ENCODE measurements at regions of chr5 and their contacts with region 1.

Region 1: GRCh38 chr5:25190521-25191000 is 545.8 kb upstream of the CDH10 start:
- DNase-seq: no peak
- H3K4me3 ChIP-seq: no peak overlapping the region
- H3K27ac ChIP-seq: no peak overlapping the region
- H3K4me1 ChIP-seq: no peaks in the 10 kb centered on the region
- H3K27me3 ChIP-seq: no peaks in the 10 kb centered on the region
- CTCF ChIP-seq: no peak

Region 2: DNA sequence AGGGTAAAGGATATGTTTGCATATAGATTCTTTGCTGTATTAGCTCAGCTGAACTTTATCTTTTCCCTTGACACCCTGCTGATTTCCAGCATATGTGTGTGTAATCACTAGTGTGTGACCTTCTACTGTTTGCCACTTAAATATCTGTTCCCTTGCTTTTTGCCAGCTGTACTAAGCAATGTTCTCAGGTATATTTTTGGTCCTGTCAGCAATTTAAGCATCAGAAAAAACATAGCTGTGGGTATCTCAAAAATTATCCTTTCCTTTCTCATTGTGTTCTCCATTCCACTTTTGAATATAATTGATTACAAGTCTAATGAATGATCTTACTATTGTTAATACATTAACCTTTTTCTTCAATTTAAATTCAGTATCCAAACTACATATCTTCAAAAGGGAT is 486.6 kb before region 1 on chr5:
- CTCF ChIA-PET with region 1: no interaction called
- POLR2A ChIA-PET with region 1: interaction called, 12 read pairs
- intact Hi-C with region 1: no loop called
- DNase-seq: no peak
- H3K4me3 ChIP-seq: no peak overlapping the region
- H3K27ac ChIP-seq: no peak overlapping the region
- H3K4me1 ChIP-seq: peaks cover 5% of the 10 kb centered on the region
- H3K27me3 ChIP-seq: no peaks in the 10 kb centered on the region
- CTCF ChIP-seq: no peak

Region 3: GRCh38 chr5:24923400-24923799 is 267.2 kb before region 1 on chr5:
- CTCF ChIA-PET with region 1: no interaction called
- POLR2A ChIA-PET with region 1: no interaction called
- intact Hi-C with region 1: no loop called
- DNase-seq: no peak
- H3K4me3 ChIP-seq: no peak overlapping the region
- H3K27ac ChIP-seq: no peak overlapping the region
- H3K4me1 ChIP-seq: no peaks in the 10 kb centered on the region
- H3K27me3 ChIP-seq: no peaks in the 10 kb centered on the region
- CTCF ChIP-seq: no peak